Mammary epithelial cell (primary cell): ENCODE measurements at regions of chr6 and their contacts with region 1.

Region 1: DNA sequence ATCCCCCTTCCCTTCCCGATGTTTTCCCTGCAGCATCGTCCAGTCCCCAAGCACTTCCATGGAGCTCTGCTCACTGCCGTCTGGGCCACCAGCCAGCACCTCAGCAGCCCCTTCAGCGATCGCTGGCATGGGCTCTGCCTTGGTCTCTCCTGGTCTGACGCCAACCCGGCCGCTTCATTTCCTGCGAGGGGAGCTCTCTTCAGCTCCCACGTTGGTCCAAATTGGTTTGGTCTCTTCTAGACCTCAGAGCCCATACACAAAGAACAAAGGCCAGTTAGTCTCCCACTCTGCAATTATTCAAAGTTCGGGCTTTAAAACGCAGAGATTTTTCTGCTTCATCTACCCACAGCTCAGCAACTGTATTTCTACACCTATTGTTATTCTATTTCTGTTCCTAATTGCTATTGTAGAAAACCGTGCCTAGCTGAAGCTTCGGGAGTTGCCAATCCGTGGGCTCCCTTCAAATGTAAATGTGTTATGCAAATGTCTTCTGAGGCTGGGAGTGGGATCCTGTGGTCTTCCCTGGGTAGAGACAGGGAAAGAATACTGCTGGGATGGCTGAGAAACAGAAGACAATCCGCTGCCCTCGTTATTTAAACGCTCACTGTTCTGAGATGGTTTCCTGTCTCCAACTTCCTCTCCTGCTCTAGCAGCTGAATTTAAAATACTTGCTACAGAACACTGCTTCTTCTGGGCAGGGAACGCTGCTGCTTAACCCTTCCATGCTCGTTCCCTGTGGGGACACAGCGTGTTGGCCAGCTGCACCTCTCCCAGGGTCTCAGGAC is 154.2 kb upstream of the QKI start:
- DNase-seq: no peak
- H3K4me3 ChIP-seq: no peak overlapping the region
- H3K27ac ChIP-seq: no peak overlapping the region
- H3K4me1 ChIP-seq: no peaks in the 10 kb centered on the region
- H3K27me3 ChIP-seq: no peaks in the 10 kb centered on the region
- CTCF ChIP-seq: no peak

Region 2: GRCh38 chr6:163170294-163170883 is 89.9 kb before region 1 on chr6:
- CTCF ChIA-PET with region 1: no interaction called
- dilution Hi-C with region 1: no loop called
- in situ Hi-C with region 1: no loop called
- intact Hi-C with region 1: no loop called
- DNase-seq: no peak
- H3K4me3 ChIP-seq: no peak overlapping the region
- H3K27ac ChIP-seq: no peak overlapping the region
- H3K4me1 ChIP-seq: no peaks in the 10 kb centered on the region
- H3K27me3 ChIP-seq: no peaks in the 10 kb centered on the region
- CTCF ChIP-seq: peak; percentile 27 to 53

Region 3: DNA sequence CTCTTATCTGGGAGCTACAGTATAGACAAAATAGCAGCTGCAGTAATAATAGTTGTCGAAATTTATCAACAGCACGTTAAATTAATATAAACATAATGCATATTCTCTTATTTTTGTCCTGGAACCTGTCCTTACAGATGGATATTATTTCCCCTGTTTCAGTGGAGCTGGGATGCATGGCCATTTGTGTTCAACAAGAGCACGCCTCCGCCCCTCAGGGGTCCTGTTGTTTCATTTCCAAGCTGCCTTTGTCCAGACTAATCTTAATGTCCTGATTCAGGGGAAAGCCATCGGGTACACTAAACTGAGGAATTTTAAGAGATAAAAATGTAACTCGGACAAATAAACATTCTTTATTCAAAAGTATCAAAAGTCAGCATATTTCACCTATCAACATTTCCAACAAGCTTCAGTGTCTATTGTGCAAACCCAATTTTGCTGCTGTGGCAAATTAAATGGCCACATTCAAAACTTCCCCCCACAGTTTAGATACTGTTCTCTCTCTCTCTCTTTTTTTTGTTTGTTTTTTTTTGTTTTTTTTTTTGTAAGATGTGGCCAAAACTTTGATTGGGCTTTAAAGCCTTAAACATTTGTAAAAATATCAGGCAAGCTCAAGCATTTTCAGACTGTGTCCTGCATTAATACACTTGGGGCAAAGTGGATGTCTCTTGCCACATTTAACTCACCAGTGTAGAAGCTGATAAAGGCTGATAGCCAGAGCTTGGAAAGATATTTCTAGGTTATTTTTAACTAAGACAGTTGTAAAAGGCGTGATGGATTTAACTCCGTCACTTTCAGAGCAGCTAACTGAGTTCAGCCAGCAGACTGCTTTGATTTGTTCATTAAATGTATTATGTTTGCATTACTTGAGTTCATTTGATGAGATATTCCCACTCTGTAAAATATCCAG is 41.7 kb after region 1 on chr6:
- CTCF ChIA-PET with region 1: no interaction called
- dilution Hi-C with region 1: loop called (anchors 5 kb)
- in situ Hi-C with region 1: no loop called
- intact Hi-C with region 1: no loop called
- DNase-seq: no peak
- H3K4me3 ChIP-seq: no peak overlapping the region
- H3K27ac ChIP-seq: no peak overlapping the region
- H3K4me1 ChIP-seq: no peaks in the 10 kb centered on the region
- H3K27me3 ChIP-seq: no peaks in the 10 kb centered on the region
- CTCF ChIP-seq: no peak